ENCODE measurements at regions of chr1 and their contacts with region 1.

Region 1: GRCh38 chr1:159924981-159925712 is at the start of gene TAGLN2:
- DNase-seq: peak; percentile 93
- H3K4me3 Mint-ChIP-seq: peak within 1 kb of the TSS; percentile 93
- H3K27ac Mint-ChIP-seq: peak within 1 kb of the TSS; percentile 98
- H3K4me1 Mint-ChIP-seq: peaks cover 38% of the 10 kb centered on the region
- H3K27me3 Mint-ChIP-seq: no peaks in the 10 kb centered on the region
- total RNA-seq, gene TAGLN2: 597 to 607 TPM

Region 2: GRCh38 chr1:159009704-159010361 is 915.3 kb before region 1 on chr1 and contains the start of gene IFI16:
- CTCF ChIA-PET with region 1: no interaction called
- POLR2A ChIA-PET with region 1: interaction called, 4 read pairs
- intact Hi-C with region 1: loop called (anchors 5 kb)
- DNase-seq: peak; percentile 77
- H3K4me3 Mint-ChIP-seq: peak within 1 kb of the TSS; percentile 90
- H3K27ac Mint-ChIP-seq: peak within 1 kb of the TSS; percentile 100
- H3K4me1 Mint-ChIP-seq: peaks cover 51% of the 10 kb centered on the region
- H3K27me3 Mint-ChIP-seq: no peaks in the 10 kb centered on the region
- total RNA-seq, gene IFI16: 215 to 220 TPM

Region 3: DNA sequence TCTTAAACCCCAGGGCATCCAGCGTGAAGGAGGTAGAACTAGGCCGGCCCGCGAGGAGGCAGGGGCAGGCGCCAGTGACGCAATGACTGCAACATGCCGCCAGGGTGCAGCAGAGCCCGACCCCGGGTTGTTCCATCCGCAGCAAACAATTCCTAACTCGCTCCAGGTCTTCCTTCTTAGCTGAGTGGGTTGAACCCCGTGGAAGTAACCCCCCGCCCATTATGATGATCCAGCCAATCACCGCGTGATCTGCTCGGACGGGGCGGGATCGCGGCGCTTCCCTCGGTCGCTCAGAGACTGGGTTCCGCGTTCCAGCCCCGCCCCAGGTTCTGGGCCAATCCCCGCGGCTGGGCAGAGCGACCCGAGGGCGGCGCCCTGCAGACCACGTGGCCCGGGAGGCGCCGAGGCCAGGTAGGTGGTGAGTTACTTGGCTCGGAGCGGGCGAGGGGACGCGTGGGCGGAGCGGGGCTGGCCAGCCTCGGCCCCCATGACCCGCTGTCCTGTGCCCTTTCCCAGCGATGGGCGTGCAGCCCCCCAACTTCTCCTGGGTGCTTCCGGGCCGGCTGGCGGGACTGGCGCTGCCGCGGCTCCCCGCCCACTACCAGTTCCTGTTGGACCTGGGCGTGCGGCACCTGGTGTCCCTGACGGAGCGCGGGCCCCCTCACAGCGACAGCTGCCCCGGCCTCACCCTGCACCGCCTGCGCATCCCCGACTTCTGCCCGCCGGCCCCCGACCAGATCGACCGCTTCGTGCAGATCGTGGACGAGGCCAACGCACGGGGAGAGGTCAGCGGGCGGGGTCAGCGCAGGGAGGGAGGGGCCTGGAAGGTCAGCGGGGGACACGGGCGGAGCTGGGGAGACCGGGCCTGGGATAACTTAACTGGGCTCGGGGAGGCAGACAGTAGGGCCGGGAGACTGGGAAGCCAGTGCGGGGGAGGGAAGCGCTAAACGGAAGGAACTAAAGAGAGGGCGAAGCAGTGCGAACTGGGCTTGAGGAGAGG is 144.3 kb before region 1 on chr1 and contains the start of gene DUSP23:
- CTCF ChIA-PET with region 1: no interaction called
- POLR2A ChIA-PET with region 1: interaction called, 3 read pairs
- intact Hi-C with region 1: loop called (anchors 1 kb)
- DNase-seq: peak; percentile 98
- H3K4me3 Mint-ChIP-seq: peak within 1 kb of the TSS; percentile 78
- H3K27ac Mint-ChIP-seq: peak within 1 kb of the TSS; percentile 25
- H3K4me1 Mint-ChIP-seq: peaks cover 5% of the 10 kb centered on the region
- H3K27me3 Mint-ChIP-seq: no peaks in the 10 kb centered on the region
- total RNA-seq, gene DUSP23: 26.9 to 28.3 TPM

Region 4: GRCh38 chr1:159829273-159829634 is 95.9 kb before region 1 on chr1:
- CTCF ChIA-PET with region 1: no interaction called
- POLR2A ChIA-PET with region 1: no interaction called
- intact Hi-C with region 1: no loop called
- DNase-seq: no peak
- H3K4me3 Mint-ChIP-seq: no peak overlapping the region
- H3K27ac Mint-ChIP-seq: no peak overlapping the region
- H3K4me1 Mint-ChIP-seq: peaks cover 42% of the 10 kb centered on the region
- H3K27me3 Mint-ChIP-seq: no peaks in the 10 kb centered on the region

Region 5: GRCh38 chr1:160031365-160032164 is 106.4 kb after region 1 on chr1 and contains the start of gene PIGM:
- CTCF ChIA-PET with region 1: no interaction called
- POLR2A ChIA-PET with region 1: interaction called, 6 read pairs
- intact Hi-C with region 1: loop called (anchors 1 kb)
- DNase-seq: peak; percentile 97
- H3K4me3 Mint-ChIP-seq: peak within 1 kb of the TSS; percentile 96
- H3K27ac Mint-ChIP-seq: peak within 1 kb of the TSS; percentile 89
- H3K4me1 Mint-ChIP-seq: peaks cover 33% of the 10 kb centered on the region
- H3K27me3 Mint-ChIP-seq: no peaks in the 10 kb centered on the region
- total RNA-seq, gene PIGM: 4.4 to 4.7 TPM

Region 6: GRCh38 chr1:160646711-160647328 is 721.7 kb after region 1 on chr1 and contains the start of gene SLAMF1:
- CTCF ChIA-PET with region 1: no interaction called
- POLR2A ChIA-PET with region 1: no interaction called
- intact Hi-C with region 1: loop called (anchors 10 kb)
- DNase-seq: peak; percentile 85
- H3K4me3 Mint-ChIP-seq: peak within 1 kb of the TSS; percentile 96
- H3K27ac Mint-ChIP-seq: peak within 1 kb of the TSS; percentile 98
- H3K4me1 Mint-ChIP-seq: peaks cover 47% of the 10 kb centered on the region
- H3K27me3 Mint-ChIP-seq: no peaks in the 10 kb centered on the region
- total RNA-seq, gene SLAMF1: 166 TPM